ENCODE measurements at regions of chr12 and their contacts with region 1.

Region 1: DNA sequence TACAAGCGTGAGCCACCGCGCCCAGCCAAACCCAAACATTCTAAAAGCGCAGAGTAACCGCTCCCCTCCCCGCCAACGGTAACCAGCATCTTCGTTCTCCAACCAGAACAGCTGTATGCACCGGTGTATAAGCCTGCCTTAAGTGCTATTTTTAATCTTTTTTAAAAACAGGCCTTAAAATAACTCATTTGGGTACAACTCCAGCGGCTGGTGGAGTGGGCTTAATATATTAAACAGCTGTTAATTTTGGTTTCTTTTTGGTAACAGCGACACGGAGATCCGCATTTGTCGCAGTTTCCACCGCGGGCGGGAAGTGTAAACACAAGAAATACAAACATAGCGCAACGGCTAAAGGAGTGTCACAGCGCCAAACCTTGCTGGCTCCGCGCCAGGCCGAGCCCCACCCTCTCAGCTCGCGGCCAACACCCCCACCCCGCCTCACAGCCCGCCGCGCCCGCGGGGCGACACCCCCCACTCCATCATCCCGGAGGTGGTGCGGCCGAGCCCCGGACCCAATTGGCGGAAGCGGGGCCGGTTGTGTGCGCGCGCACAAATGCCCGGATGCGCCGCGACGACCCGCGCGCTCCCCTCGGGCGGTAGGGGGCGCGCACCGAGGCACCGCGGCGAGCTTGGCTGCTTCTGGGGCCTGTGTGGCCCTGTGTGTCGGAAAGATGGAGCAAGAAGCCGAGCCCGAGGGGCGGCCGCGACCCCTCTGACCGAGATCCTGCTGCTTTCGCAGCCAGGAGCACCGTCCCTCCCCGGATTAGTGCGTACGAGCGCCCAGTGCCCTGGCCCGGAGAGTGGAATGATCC is at the start of gene MDM2:
- DNase-seq: peak; percentile 96 to 99 (median 98)
- H3K4me3 ChIP-seq: peak within 1 kb of the TSS; percentile 87
- H3K4me3 Mint-ChIP-seq: peak within 1 kb of the TSS; percentile 92 to 97 (median 95)
- H3K27ac ChIP-seq: peak within 1 kb of the TSS; percentile 95
- H3K27ac Mint-ChIP-seq: peak within 1 kb of the TSS; percentile 98 to 99 (median 99)
- H3K4me1 ChIP-seq: peaks cover 24% of the 10 kb centered on the region
- H3K4me1 Mint-ChIP-seq: peaks cover 30 to 43% (median 38%) of the 10 kb centered on the region in 3 donors
- H3K27me3 ChIP-seq: no peaks in the 10 kb centered on the region
- H3K27me3 Mint-ChIP-seq: peaks cover 0 to 4% of the 10 kb centered on the region in 2 donors
- total RNA-seq, gene MDM2: 237 to 246 TPM

Region 2: GRCh38 chr12:68745904-68746571 is 61.7 kb before region 1 on chr12 and contains the start of gene SLC35E3:
- CTCF ChIA-PET with region 1: interaction called, 19 read pairs
- POLR2A ChIA-PET with region 1: interaction called, 32 read pairs
- DNase-seq: peak; percentile 86 to 93 (median 87)
- H3K4me3 ChIP-seq: peak within 1 kb of the TSS; percentile 86
- H3K4me3 Mint-ChIP-seq: peak within 1 kb of the TSS; percentile 93 to 99 (median 97)
- H3K27ac ChIP-seq: peak within 1 kb of the TSS; percentile 76
- H3K27ac Mint-ChIP-seq: peak within 1 kb of the TSS; percentile 81 to 98 (median 95)
- H3K4me1 ChIP-seq: peaks cover 24% of the 10 kb centered on the region
- H3K4me1 Mint-ChIP-seq: peaks cover 39 to 53% (median 53%) of the 10 kb centered on the region in 3 donors
- H3K27me3 ChIP-seq: no peaks in the 10 kb centered on the region
- H3K27me3 Mint-ChIP-seq: no peaks in the 10 kb centered on the region
- total RNA-seq, gene SLC35E3: 4.0 to 5.1 TPM

Region 3: GRCh38 chr12:68796399-68796798 is 11.4 kb before region 1 on chr12:
- CTCF ChIA-PET with region 1: interaction called, 20 read pairs
- POLR2A ChIA-PET with region 1: interaction called, 3 read pairs
- DNase-seq: no peak
- H3K4me3 ChIP-seq: no peak overlapping the region
- H3K4me3 Mint-ChIP-seq: no peak overlapping the region
- H3K27ac ChIP-seq: no peak overlapping the region
- H3K27ac Mint-ChIP-seq: no peak overlapping the region
- H3K4me1 ChIP-seq: no peaks in the 10 kb centered on the region
- H3K4me1 Mint-ChIP-seq: no peaks in the 10 kb centered on the region
- H3K27me3 ChIP-seq: no peaks in the 10 kb centered on the region
- H3K27me3 Mint-ChIP-seq: peaks cover 0 to 7% of the 10 kb centered on the region in 2 donors

Region 4: DNA sequence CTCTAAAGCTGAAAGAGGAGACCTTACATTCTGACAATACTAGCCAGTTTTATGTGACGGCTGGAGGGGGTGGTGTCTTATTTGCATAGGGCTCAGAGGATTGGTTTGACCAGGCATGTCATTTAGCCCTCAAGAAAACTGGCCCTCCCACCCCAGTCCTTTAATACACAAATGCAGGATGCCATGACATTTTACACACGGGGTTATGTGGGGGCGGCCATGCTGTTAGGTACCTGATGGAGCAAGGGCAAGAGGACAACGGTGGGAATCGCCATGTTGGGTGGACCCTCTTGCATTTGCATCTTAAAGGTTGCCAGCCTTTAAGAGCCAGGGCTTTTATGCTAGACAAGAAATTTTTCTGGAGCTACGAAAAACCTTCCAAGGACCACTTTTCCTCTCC is 23.5 kb after region 1 on chr12:
- CTCF ChIA-PET with region 1: interaction called, 14 read pairs
- POLR2A ChIA-PET with region 1: no interaction called
- DNase-seq: no peak
- H3K4me3 ChIP-seq: no peak overlapping the region
- H3K4me3 Mint-ChIP-seq: no peak overlapping the region
- H3K27ac ChIP-seq: no peak overlapping the region
- H3K27ac Mint-ChIP-seq: peak overlapping the region in 1 of 8 donors; percentile 48
- H3K4me1 ChIP-seq: no peaks in the 10 kb centered on the region
- H3K4me1 Mint-ChIP-seq: peaks cover 10 to 26% (median 22%) of the 10 kb centered on the region in 3 donors
- H3K27me3 ChIP-seq: no peaks in the 10 kb centered on the region
- H3K27me3 Mint-ChIP-seq: no peaks in the 10 kb centered on the region

Region 5: GRCh38 chr12:68871921-68872320 is 64.1 kb after region 1 on chr12:
- CTCF ChIA-PET with region 1: no interaction called
- POLR2A ChIA-PET with region 1: no interaction called
- DNase-seq: no peak
- H3K4me3 ChIP-seq: no peak overlapping the region
- H3K4me3 Mint-ChIP-seq: no peak overlapping the region
- H3K27ac ChIP-seq: no peak overlapping the region
- H3K27ac Mint-ChIP-seq: peak overlapping the region in 1 of 8 donors; percentile 54
- H3K4me1 ChIP-seq: no peaks in the 10 kb centered on the region
- H3K4me1 Mint-ChIP-seq: no peaks in the 10 kb centered on the region
- H3K27me3 ChIP-seq: no peaks in the 10 kb centered on the region
- H3K27me3 Mint-ChIP-seq: peaks cover 11 to 13% of the 10 kb centered on the region in 2 donors

Region 6: GRCh38 chr12:68899251-68899771 is 91.5 kb after region 1 on chr12:
- CTCF ChIA-PET with region 1: no interaction called
- POLR2A ChIA-PET with region 1: no interaction called
- DNase-seq: no peak
- H3K4me3 ChIP-seq: no peak overlapping the region
- H3K4me3 Mint-ChIP-seq: no peak overlapping the region
- H3K27ac ChIP-seq: no peak overlapping the region
- H3K27ac Mint-ChIP-seq: no peak overlapping the region
- H3K4me1 ChIP-seq: no peaks in the 10 kb centered on the region
- H3K4me1 Mint-ChIP-seq: no peaks in the 10 kb centered on the region
- H3K27me3 ChIP-seq: no peaks in the 10 kb centered on the region
- H3K27me3 Mint-ChIP-seq: peaks cover 8 to 28% of the 10 kb centered on the region in 2 donors

Measured in CD8-positive, alpha-beta memory T cell (primary cell).